ENCODE measurements at regions of chr21 and their contacts with region 1.

Region 1: DNA sequence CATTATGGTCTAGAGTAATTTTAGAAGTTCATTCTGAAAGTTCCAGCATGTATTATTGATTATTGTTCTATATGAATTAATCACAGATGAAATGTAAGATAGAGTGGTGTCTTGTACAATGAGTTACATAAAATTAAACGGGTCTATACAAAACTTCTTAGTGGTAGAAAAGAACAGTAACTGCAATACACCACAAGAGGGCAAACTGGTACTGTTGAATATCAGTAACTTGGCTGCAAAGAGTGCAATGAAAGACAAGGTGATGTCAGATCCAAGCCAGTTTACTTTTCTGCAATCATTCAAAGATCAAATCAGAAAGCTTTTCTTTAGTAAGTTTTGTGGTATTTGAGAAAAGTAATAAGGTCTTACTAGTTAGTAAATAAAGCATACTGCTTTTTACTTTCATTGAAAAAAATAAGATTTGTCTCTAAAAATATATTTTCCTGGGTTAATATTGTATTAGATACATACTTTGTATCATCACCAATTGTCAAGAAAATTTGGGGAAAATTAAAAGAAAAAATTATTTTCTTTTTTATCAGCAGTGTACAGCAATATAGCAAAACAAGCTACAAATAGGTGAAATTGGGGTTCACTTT is 66.4 kb upstream of the BTG3 start:
- DNase-seq: no peak
- H3K4me3 ChIP-seq: no peak overlapping the region
- H3K27ac ChIP-seq: no peak overlapping the region
- H3K4me1 ChIP-seq: no peaks in the 10 kb centered on the region
- H3K27me3 ChIP-seq: no peaks in the 10 kb centered on the region
- CTCF ChIP-seq: peak; percentile 73 to 90 (median 79)
- POLR2A ChIP-seq: no peak

Region 2: DNA sequence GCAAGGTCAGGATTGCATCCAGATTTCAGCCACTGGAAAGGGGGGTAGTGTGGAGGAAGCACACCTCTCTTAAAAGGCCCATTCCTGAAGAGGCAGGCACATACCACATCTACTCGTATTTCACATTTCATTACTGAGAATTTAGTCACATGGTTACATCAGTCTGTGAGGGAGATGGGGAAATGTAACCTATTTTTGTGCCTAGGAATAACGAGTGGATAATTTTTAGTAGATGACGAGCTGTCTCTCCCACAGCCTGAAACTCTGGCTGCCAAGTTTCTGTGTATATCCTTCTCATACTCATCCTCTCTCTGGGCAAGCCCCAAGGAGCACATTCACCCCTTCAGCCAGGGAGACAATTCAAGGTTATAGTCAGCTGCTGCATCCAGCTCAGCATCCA is 150.4 kb after region 1 on chr21:
- intact Hi-C with region 1: no loop called
- DNase-seq: no peak
- H3K4me3 ChIP-seq: no peak overlapping the region
- H3K27ac ChIP-seq: no peak overlapping the region
- H3K4me1 ChIP-seq: no peaks in the 10 kb centered on the region
- H3K27me3 ChIP-seq: no peaks in the 10 kb centered on the region
- CTCF ChIP-seq: no peak
- POLR2A ChIP-seq: no peak

Region 3: GRCh38 chr21:17925000-17925610 is 246.0 kb after region 1 on chr21:
- intact Hi-C with region 1: loop called (anchors 5 kb)
- DNase-seq: peak; percentile 45 to 58
- H3K4me3 ChIP-seq: no peak overlapping the region
- H3K27ac ChIP-seq: no peak overlapping the region
- H3K4me1 ChIP-seq: peaks cover 0 to 4% of the 10 kb centered on the region in 2 donors
- H3K27me3 ChIP-seq: no peaks in the 10 kb centered on the region
- CTCF ChIP-seq: peak; percentile 58 to 84 (median 72)
- POLR2A ChIP-seq: no peak

Region 4: GRCh38 chr21:17981060-17981740 is 302.1 kb after region 1 on chr21:
- intact Hi-C with region 1: no loop called
- DNase-seq: no peak
- H3K4me3 ChIP-seq: no peak overlapping the region
- H3K27ac ChIP-seq: no peak overlapping the region
- H3K4me1 ChIP-seq: no peaks in the 10 kb centered on the region
- H3K27me3 ChIP-seq: no peaks in the 10 kb centered on the region
- CTCF ChIP-seq: no peak
- POLR2A ChIP-seq: no peak

Measured in thyroid gland (tissue), 4 donors.